ENCODE measurements at regions of chr22 and their contacts with region 1.

Region 1: DNA sequence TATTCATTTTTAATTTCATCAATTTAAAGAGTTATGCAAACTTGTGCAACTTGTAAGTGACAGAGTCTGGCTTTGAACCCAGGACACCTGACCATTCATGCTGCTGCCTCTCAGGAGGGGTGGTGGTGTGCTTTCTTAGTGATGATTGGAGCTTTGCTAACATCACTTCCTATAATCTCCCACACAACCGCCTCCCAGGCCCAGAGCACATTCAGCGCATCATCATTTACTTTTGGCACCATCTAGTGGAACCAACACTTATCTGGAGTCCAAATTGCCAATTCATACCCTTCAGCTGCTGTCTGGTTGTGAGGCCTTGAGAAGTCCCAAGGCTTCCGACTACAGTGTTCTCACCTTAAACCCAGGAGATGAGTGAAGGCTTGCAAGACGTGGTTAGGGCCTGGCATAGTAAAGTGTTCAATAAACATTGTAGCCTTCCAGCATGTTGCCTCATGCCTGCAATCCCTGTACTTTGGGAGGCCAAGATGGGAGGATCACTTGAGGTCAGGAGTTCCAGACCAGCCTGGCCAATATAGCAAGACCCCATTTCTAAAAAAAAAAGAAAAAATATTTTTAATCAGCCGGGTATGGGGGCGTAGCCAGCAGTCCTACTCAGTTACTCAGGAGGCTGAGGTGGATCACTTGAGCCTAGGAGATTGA is 1.1 kb upstream of the TTLL1 start:
- DNase-seq: peak; percentile 84
- ATAC-seq: peak; percentile 41
- H3K4me3 ChIP-seq: no peak overlapping the region
- H3K27ac ChIP-seq: no peak overlapping the region
- H3K4me1 ChIP-seq: peaks cover 9% of the 10 kb centered on the region
- H3K27me3 ChIP-seq: no peaks in the 10 kb centered on the region
- CTCF ChIP-seq: peak; percentile 70

Region 2: DNA sequence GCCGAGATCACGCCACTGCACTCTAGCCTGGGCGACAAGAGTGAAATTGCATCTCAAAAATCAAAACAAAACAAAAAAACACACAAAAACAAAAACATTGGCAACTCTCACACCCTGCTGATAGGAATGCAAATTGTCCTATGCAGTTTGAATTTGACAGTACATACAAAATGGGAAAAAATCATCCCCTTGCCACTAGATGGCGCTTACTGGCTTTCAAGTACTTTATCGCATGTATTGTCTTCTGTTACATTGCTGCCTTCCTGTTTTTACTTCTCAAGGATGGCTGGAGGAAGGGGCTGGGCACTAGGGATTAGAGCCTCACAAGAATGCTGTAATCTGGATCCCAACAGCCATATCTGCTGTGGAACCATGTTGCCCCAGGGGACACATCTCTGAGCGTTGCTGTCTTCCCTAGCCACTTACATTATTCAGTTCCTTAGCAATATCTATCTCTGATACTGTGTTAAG is 310.2 kb before region 1 on chr22:
- CTCF ChIA-PET with region 1: no interaction called
- POLR2A ChIA-PET with region 1: no interaction called
- intact Hi-C with region 1: loop called (anchors 2 kb)
- DNase-seq: peak; percentile 82
- ATAC-seq: peak; percentile 75
- H3K4me3 ChIP-seq: no peak overlapping the region
- H3K27ac ChIP-seq: no peak overlapping the region
- H3K4me1 ChIP-seq: no peaks in the 10 kb centered on the region
- H3K27me3 ChIP-seq: no peaks in the 10 kb centered on the region
- CTCF ChIP-seq: peak; percentile 74

Measured in PC-3 (cell line).